ENCODE measurements at regions of chr2 and their contacts with region 1.

Region 1: DNA sequence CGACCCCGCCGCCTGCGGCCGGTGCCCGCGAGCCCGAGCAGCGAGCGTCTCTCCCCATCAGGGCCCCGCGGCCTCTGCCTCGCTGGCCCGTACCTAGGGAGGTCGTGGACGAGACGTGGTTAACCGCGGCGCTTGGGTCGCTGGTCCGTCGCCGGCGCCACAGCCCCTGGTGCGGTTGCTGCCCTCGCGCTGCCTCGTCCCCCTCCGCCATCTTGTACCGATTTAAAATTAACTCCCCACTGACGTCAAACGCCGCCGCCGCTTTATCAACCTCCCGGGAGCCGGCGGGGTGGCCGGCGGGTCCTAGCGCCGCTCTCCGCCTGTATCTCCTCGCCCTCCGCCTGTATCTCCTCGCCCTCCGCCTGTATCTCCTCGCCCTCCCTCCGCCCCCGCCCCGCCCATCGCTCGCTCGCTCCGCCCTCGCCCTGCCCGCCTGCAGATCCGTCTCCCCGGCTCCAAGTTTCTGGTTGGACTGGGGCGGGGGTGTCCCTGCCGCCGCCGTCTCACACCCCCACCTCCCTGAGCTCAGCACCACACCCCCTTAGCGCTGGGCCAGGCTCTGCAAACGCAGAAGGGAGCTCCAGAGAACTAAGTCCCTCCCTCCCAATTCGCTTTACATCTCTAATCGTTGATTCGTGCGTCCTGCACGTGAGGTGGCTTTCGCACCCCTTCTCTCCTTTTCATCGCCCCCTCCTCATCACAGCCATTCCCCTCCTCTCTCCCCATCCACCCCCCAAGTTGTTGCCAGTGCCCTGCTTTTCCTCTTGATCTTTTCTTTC is at the start of gene ATL2:
- DNase-seq: peak; percentile 83 to 94 (median 92)
- ATAC-seq: peak; percentile 92
- H3K4me3 ChIP-seq: peak within 1 kb of the TSS; percentile 75
- H3K4me3 Mint-ChIP-seq: peak within 1 kb of the TSS; percentile 93 to 100 (median 97)
- H3K27ac ChIP-seq: peak within 1 kb of the TSS; percentile 98
- H3K27ac Mint-ChIP-seq: peak within 1 kb of the TSS; percentile 87 to 99 (median 95)
- H3K4me1 ChIP-seq: peaks cover 28 to 30% of the 10 kb centered on the region in 2 donors
- H3K4me1 Mint-ChIP-seq: peaks cover 53 to 83% (median 68%) of the 10 kb centered on the region in 7 donors
- H3K27me3 ChIP-seq: no peaks in the 10 kb centered on the region
- H3K27me3 Mint-ChIP-seq: peaks cover 0 to 3% (median 0%) of the 10 kb centered on the region in 5 donors
- total RNA-seq, gene ATL2: 45.5 to 59.5 (median 53.0) TPM

Region 2: GRCh38 chr2:37156857-37157714 is 1220.2 kb before region 1 on chr2 and contains the start of gene EIF2AK2:
- CTCF ChIA-PET with region 1: no interaction called
- POLR2A ChIA-PET with region 1: no interaction called
- intact Hi-C with region 1: loop called in 1 of 2 experiments (anchors 5 kb)
- DNase-seq: peak; percentile 59 to 85 (median 80)
- ATAC-seq: peak; percentile 96
- H3K4me3 ChIP-seq: peak within 1 kb of the TSS; percentile 92
- H3K4me3 Mint-ChIP-seq: peak within 1 kb of the TSS; percentile 88 to 99 (median 94)
- H3K27ac ChIP-seq: peak within 1 kb of the TSS; percentile 81
- H3K27ac Mint-ChIP-seq: peak within 1 kb of the TSS; percentile 86 to 96 (median 92)
- H3K4me1 ChIP-seq: peaks cover 18 to 25% of the 10 kb centered on the region in 2 donors
- H3K4me1 Mint-ChIP-seq: peaks cover 29 to 57% (median 48%) of the 10 kb centered on the region in 7 donors
- H3K27me3 ChIP-seq: no peaks in the 10 kb centered on the region
- H3K27me3 Mint-ChIP-seq: peaks cover 0 to 4% (median 0%) of the 10 kb centered on the region in 5 donors
- total RNA-seq, gene EIF2AK2: 21.2 to 91.9 (median 24.2) TPM

Region 3: GRCh38 chr2:38076606-38077430 is 300.4 kb before region 1 on chr2:
- CTCF ChIA-PET with region 1: no interaction called
- POLR2A ChIA-PET with region 1: no interaction called
- intact Hi-C with region 1: loop called in 1 of 2 experiments (anchors 5 kb)
- DNase-seq: peak in 2 of 9 donors; percentile 12 to 78
- ATAC-seq: peak; percentile 67
- H3K4me3 ChIP-seq: no peak overlapping the region
- H3K4me3 Mint-ChIP-seq: peak overlapping the region in 9 of 10 donors; percentile 18 to 85 (median 61)
- H3K27ac ChIP-seq: no peak overlapping the region
- H3K27ac Mint-ChIP-seq: peak overlapping the region in 1 of 9 donors; percentile 83
- H3K4me1 ChIP-seq: no peaks in the 10 kb centered on the region
- H3K4me1 Mint-ChIP-seq: peaks cover 7 to 43% (median 19%) of the 10 kb centered on the region in 7 donors
- H3K27me3 ChIP-seq: peaks cover 4 to 5% of the 10 kb centered on the region in 2 donors
- H3K27me3 Mint-ChIP-seq: peaks cover 39 to 73% (median 51%) of the 10 kb centered on the region in 5 donors

Region 4: DNA sequence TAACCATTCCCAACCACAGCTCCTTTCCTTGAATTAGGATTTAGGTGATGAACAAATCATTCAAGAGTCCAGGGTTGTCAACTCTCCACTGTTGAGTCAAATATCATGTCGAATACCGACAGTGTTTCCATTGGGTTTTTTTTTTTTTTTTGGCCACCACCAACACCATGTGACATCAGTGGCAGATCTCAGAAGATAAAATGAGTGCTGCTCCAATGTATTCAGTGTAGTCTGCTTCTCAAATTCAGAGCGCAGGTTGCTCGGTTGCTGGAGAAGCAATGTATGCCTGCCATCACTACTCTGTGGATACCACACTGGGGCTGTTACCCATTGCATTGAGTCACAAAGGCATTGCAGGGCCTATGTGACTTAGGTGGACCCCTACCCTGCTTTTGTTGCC is 10.6 kb after region 1 on chr2:
- CTCF ChIA-PET with region 1: no interaction called
- POLR2A ChIA-PET with region 1: interaction called, 9 read pairs
- intact Hi-C with region 1: loop called (anchors 1 kb)
- DNase-seq: peak in 1 of 9 donors; percentile 5
- ATAC-seq: peak; percentile 56
- H3K4me3 ChIP-seq: no peak overlapping the region
- H3K4me3 Mint-ChIP-seq: peak overlapping the region in 8 of 10 donors; percentile 16 to 63 (median 42)
- H3K27ac ChIP-seq: no peak overlapping the region
- H3K27ac Mint-ChIP-seq: peak overlapping the region in 4 of 9 donors; percentile 16 to 85 (median 84)
- H3K4me1 ChIP-seq: peaks cover 12 to 16% of the 10 kb centered on the region in 2 donors
- H3K4me1 Mint-ChIP-seq: peaks cover 18 to 28% (median 22%) of the 10 kb centered on the region in 7 donors
- H3K27me3 ChIP-seq: no peaks in the 10 kb centered on the region
- H3K27me3 Mint-ChIP-seq: peaks cover 0 to 19% (median 7%) of the 10 kb centered on the region in 5 donors

Region 5: DNA sequence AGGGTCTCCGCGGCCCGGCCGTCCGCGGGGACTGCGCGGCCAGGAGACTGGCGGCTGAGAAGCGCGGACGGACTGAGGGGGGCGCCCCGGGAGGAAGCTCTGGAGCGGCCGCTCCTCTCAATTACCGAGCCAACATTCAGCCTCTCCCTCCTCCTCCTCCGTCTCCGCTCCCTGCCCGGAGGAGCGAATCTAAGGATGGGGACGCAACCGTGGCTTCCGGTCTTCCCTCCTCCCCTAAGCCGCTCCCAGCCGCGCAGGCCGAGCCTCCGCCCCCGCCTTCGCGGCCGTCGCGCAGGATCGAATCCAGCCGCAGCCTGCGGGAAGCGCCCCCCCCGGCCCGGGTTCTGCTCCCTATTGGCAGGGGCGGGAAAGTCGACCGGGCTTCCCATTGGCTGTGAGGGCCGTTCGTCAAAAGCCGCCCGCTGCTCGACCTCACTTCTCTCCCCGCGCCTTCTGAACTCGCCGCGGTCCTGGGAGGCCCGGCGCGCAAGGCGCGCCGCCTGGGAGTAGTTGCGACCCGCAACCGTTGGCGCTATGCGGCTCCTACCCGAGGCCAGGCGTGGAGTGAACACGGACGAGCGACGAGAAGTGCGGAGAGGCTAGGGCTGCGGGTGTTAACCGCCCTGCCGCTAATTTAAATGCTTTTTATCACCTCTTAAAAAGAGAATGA is 225.6 kb after region 1 on chr2 and contains the start of gene HNRNPLL:
- CTCF ChIA-PET with region 1: no interaction called
- POLR2A ChIA-PET with region 1: no interaction called
- intact Hi-C with region 1: loop called (anchors 1 to 2 kb)
- DNase-seq: peak; percentile 86 to 98 (median 91)
- ATAC-seq: peak; percentile 91
- H3K4me3 ChIP-seq: peak within 1 kb of the TSS; percentile 86
- H3K4me3 Mint-ChIP-seq: peak within 1 kb of the TSS; percentile 88 to 97 (median 95)
- H3K27ac ChIP-seq: peak within 1 kb of the TSS; percentile 72
- H3K27ac Mint-ChIP-seq: peak within 1 kb of the TSS; percentile 82 to 94 (median 90)
- H3K4me1 ChIP-seq: peaks cover 11 to 15% of the 10 kb centered on the region in 2 donors
- H3K4me1 Mint-ChIP-seq: peaks cover 29 to 57% (median 50%) of the 10 kb centered on the region in 7 donors
- H3K27me3 ChIP-seq: no peaks in the 10 kb centered on the region
- H3K27me3 Mint-ChIP-seq: no peaks in the 10 kb centered on the region
- total RNA-seq, gene HNRNPLL: 10.1 to 66.8 (median 30.2) TPM

Region 6: DNA sequence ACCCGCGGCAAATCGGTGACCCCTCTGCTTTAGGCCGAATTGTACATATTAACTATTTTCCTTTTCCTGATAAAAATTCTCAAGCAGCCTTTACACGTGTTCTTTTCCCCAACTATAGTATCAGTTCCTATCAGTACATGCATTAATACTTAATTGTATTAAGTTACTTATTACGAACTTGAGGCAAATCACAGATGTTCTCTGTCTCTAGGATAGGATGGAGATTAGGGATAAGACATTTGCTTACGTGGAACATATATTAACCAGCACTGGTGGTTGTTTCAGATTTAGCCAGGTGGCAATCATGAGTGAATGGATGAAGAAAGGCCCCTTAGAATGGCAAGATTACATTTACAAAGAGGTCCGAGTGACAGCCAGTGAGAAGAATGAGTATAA is 401.4 kb after region 1 on chr2:
- CTCF ChIA-PET with region 1: no interaction called
- POLR2A ChIA-PET with region 1: no interaction called
- intact Hi-C with region 1: loop called (anchors 1 kb)
- DNase-seq: no peak
- ATAC-seq: no peak
- H3K4me3 ChIP-seq: peak overlapping the region; percentile 85
- H3K4me3 Mint-ChIP-seq: peak overlapping the region; percentile 94 to 100 (median 98)
- H3K27ac ChIP-seq: peak overlapping the region; percentile 81
- H3K27ac Mint-ChIP-seq: peak overlapping the region; percentile 92 to 99 (median 97)
- H3K4me1 ChIP-seq: peaks cover 0 to 5% of the 10 kb centered on the region in 2 donors
- H3K4me1 Mint-ChIP-seq: peaks cover 8 to 23% (median 17%) of the 10 kb centered on the region in 7 donors
- H3K27me3 ChIP-seq: no peaks in the 10 kb centered on the region
- H3K27me3 Mint-ChIP-seq: peaks cover 5 to 21% (median 17%) of the 10 kb centered on the region in 5 donors